Posterior vena cava (tissue), 2 donors: ENCODE measurements at regions of chrX and their contacts with region 1.

Region 1: DNA sequence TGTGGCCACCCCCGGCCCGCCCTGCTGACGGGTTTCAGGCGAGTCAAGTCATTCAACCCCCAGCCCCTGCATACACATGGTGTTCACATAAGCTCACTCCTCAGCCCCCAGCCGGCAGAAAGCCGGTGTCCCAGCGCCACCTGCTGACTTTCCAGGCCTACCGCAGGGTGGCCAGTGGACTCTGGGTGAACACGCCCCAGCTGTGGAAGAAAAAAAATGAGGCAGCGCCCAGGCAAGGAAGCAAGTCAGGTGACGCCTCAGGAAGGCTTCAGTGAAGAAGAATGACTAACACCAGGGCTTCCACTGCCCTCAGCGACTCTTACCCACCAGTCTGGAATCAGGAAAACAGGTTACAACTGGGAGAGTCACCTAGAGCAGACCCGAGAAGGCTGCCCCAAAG is 15.8 kb downstream of the BCAP31 start:
- DNase-seq: peak; percentile 90

Region 2: DNA sequence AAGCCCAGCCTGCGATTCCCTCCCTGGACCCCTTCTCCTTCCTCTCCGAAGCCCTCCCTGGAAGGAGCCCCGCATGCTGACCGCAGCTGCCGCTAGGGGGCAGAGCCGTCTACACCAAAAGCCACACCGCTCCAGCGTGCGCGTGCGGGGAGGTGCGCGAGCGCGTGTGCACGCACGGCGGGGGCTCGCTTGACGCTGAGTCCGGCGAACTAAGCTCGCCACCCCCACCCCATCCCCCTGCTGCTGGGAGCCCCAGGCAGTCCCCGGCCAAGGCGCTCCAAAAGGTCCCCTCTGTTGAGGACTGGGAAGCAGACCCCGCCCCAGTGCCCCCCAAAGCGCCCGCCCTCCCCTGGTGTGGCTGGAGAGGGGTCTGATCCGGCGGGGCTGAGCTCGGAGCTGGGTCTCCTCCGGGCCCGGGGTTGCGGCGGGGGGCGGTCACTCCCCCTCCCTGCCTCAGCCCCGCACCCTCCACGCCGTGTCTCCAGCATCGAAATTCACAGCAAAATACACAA is 98.4 kb before region 1 on chrX:
- intact Hi-C with region 1: loop called in 1 of 2 experiments (anchors 10 kb)
- DNase-seq: peak; percentile 88